ENCODE measurements at regions of chr12 and their contacts with region 1.

Region 1: DNA sequence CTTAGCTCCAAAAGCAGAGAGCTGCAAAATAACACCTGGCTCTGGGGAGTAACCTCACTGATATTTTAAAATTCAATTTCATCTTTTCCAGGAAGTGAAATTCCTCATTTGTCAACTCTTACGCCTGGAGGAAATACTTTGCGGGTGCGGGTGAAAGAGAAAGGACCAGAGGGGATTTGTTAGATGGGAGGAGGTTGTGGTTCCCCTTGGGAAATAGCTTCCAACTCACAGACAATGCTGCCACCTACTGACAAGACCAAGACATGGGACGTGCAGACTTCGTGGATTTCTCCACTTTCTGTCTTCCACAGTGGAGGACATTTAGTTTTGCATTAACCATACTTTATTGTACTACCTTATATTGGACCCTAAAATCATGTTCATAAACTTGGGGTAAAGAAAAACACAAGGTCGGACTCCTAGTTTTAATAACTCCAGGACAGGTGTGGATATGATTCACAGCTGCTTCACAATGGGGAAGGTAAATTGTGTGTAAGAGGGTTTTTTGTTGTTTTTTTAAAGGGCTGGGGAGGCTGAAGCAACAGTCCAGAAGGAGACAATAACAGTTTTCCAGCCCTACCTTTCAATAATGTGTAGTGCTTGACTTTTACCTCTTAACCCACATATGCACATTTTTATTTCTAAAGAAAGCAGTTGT is 10.8 kb downstream of the FBXL14 start:
- H3K4me3 Mint-ChIP-seq: no peak overlapping the region
- H3K27ac Mint-ChIP-seq: no peak overlapping the region
- H3K4me1 Mint-ChIP-seq: peaks cover 17% of the 10 kb centered on the region
- H3K27me3 Mint-ChIP-seq: peaks cover 3% of the 10 kb centered on the region

Region 2: DNA sequence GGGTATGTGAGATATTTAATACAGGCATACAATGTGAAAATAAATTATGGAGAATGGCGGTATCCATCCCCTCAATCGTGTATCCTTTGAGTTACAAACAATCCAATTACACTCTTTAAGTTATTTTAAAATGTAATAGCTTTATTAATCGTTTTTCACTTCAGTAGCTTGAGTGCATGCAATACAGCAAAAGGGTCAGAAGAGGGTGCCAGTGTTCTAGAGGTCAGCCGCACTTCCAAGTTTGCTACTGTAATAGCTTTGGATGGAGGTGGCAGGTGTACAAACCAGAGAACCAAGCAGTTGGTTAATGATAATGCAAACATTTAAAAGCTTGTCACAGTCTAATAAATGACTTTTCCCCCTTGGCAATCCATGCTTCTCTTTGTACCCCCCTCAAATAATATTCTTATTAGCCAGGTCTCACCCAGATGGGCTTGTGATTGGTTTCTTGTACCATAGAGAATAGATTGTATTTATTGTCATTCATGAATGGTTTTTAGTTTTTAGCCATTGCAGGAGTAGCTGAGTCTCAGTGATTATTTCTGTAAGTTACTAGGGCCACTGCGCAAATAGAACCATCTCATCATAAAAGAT is 465.5 kb before region 1 on chr12:
- intact Hi-C with region 1: loop called (anchors 1 kb)
- H3K4me3 Mint-ChIP-seq: no peak overlapping the region
- H3K27ac Mint-ChIP-seq: no peak overlapping the region
- H3K4me1 Mint-ChIP-seq: no peaks in the 10 kb centered on the region
- H3K27me3 Mint-ChIP-seq: no peaks in the 10 kb centered on the region

Region 3: DNA sequence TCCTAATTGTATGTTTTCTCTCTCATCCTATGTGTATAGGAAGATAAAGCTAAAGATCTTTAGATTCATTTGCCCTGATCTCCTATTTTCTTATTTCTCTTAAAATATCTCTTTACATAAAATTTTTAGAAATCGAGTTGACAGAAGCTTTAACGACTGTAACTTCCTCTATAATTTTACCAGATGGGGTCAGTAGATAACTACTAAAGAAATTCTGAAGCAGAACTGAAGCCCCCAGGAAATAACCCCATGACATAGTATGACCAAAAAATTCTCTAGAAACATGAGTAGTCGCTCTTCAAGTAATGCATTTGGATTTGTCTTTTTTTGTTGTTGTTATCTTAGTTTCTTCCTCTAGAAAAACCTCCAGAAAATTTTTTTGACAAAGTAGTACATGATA is 304.5 kb before region 1 on chr12:
- intact Hi-C with region 1: loop called (anchors 1 kb)
- H3K4me3 Mint-ChIP-seq: no peak overlapping the region
- H3K27ac Mint-ChIP-seq: no peak overlapping the region
- H3K4me1 Mint-ChIP-seq: peaks cover 5% of the 10 kb centered on the region
- H3K27me3 Mint-ChIP-seq: no peaks in the 10 kb centered on the region